ENCODE measurements at regions of chr17 and their contacts with region 1.

Region 1: DNA sequence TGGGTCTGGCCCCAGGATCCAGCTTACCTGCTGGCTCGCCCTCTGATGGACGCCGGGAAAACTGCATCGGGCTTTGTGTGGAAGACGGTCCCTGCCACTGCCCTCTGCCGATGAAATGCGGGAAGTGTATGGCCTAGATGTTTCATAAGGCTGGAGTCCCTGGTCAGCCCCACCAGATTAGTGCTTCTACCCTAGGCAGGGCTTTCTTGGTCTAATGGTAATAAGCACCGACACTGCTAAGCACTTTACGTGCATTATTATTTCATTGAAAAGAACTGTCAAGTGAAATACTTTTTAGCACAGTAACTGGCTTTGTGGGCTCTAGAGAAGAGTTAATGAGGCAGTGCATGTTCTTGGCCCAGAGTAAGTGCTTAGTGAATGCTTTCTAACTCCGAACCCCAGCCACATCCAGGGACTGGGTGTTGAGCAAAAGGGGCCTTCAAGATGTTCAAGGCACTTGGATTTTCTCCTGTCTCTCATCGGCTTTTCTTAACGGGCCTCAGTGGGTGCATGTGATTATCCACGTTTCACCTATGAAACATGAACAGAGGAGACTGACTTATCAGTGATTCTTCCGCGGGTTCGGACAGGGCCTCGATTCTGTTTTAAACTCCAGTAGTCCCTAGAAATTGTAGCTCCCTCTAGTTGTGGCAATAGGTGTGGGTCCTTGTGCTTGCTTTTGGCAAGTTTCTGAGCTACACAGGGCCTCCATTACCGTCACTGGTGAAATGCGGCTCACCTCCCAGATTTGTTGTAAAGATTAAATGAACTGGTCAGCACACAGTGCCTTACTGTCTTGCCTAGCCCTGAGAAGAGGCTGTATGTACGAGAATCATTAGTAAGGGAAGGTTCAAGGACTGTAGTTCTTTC is 6.6 kb downstream of the TRAF4 start:
- DNase-seq: peak; percentile 66 to 94 (median 83)
- ATAC-seq: peak; percentile 82 to 92 (median 86)
- H3K4me3 ChIP-seq: no peak overlapping the region
- H3K4me3 Mint-ChIP-seq: no peak overlapping the region
- H3K27ac ChIP-seq: no peak overlapping the region
- H3K27ac Mint-ChIP-seq: peak overlapping the region in 1 of 2 donors; percentile 58
- H3K4me1 ChIP-seq: peaks cover 9 to 25% of the 10 kb centered on the region in 2 experiments
- H3K4me1 Mint-ChIP-seq: peaks cover 5 to 20% (median 20%) of the 10 kb centered on the region in 3 donors
- H3K27me3 ChIP-seq: no peaks in the 10 kb centered on the region
- H3K27me3 Mint-ChIP-seq: no peaks in the 10 kb centered on the region

Region 2: GRCh38 chr17:28720247-28720996 is 30.0 kb before region 1 on chr17:
- CTCF ChIA-PET with region 1: interaction called, 3 to 16 read pairs
- POLR2A ChIA-PET with region 1: interaction called, 3 to 4 read pairs
- DNase-seq: peak in 2 of 35 experiments; percentile 23 to 54
- ATAC-seq: no peak
- H3K4me3 ChIP-seq: peak overlapping the region; percentile 77 to 86
- H3K4me3 Mint-ChIP-seq: peak overlapping the region; percentile 97 to 99 (median 98)
- H3K27ac ChIP-seq: peak overlapping the region; percentile 75
- H3K27ac Mint-ChIP-seq: peak overlapping the region; percentile 97 to 98
- H3K4me1 ChIP-seq: peaks cover 21 to 64% of the 10 kb centered on the region in 2 experiments
- H3K4me1 Mint-ChIP-seq: peaks cover 61 to 64% (median 62%) of the 10 kb centered on the region in 3 donors
- H3K27me3 ChIP-seq: peaks cover 0 to 29% of the 10 kb centered on the region in 2 experiments
- H3K27me3 Mint-ChIP-seq: peaks cover 3 to 23% of the 10 kb centered on the region in 2 donors

Region 3: GRCh38 chr17:28726226-28727130 is 23.9 kb before region 1 on chr17 and contains the start of gene TLCD1:
- CTCF ChIA-PET with region 1: interaction called, 35 to 197 read pairs
- POLR2A ChIA-PET with region 1: interaction called, 3 to 10 read pairs
- DNase-seq: peak; percentile 74 to 94 (median 86)
- ATAC-seq: peak; percentile 37 to 61 (median 53)
- H3K4me3 ChIP-seq: peak within 1 kb of the TSS; percentile 86 to 87
- H3K4me3 Mint-ChIP-seq: peak within 1 kb of the TSS; percentile 93 to 100 (median 95)
- H3K27ac ChIP-seq: peak within 1 kb of the TSS; percentile 100
- H3K27ac Mint-ChIP-seq: peak within 1 kb of the TSS; percentile 96 to 99
- H3K4me1 ChIP-seq: peaks cover 16 to 58% of the 10 kb centered on the region in 2 experiments
- H3K4me1 Mint-ChIP-seq: peaks cover 51 to 62% (median 59%) of the 10 kb centered on the region in 3 donors
- H3K27me3 ChIP-seq: no peaks in the 10 kb centered on the region
- H3K27me3 Mint-ChIP-seq: no peaks in the 10 kb centered on the region
- total RNA-seq, gene TLCD1: 1.2 to 1.8 (median 1.3) TPM in 4 of 5 donors, not detected in the other

Region 4: DNA sequence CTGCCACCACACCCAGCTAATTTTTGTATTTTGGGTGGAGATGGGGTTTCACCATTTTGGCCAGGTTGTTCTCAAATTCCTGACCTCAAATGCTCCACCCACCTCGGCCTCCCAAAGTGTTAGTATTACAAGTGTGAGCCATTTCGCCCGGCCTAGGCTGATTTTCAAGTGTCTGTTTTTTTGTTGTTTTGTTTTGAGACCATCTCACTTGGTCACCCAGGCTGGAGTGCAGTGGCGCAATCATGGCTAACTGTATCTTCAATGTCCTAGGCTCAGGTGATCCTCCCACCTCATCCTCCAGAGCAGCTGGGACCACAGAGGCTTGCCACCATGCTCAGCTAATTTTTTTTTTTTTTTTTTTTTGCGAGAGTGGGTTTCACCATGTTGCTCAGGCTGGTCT is 17.7 kb before region 1 on chr17:
- CTCF ChIA-PET with region 1: interaction called, 35 to 197 read pairs
- POLR2A ChIA-PET with region 1: interaction called, 3 to 10 read pairs
- DNase-seq: no peak
- ATAC-seq: no peak
- H3K4me3 ChIP-seq: no peak overlapping the region
- H3K4me3 Mint-ChIP-seq: no peak overlapping the region
- H3K27ac ChIP-seq: no peak overlapping the region
- H3K27ac Mint-ChIP-seq: no peak overlapping the region
- H3K4me1 ChIP-seq: peaks cover 5 to 17% of the 10 kb centered on the region in 2 experiments
- H3K4me1 Mint-ChIP-seq: peaks cover 13 to 19% (median 15%) of the 10 kb centered on the region in 3 donors
- H3K27me3 ChIP-seq: no peaks in the 10 kb centered on the region
- H3K27me3 Mint-ChIP-seq: no peaks in the 10 kb centered on the region

Measured in T-cell (primary cell).